RWPE1 (cell line): ENCODE measurements at regions of chr12 and their contacts with region 1.

Region 1: DNA sequence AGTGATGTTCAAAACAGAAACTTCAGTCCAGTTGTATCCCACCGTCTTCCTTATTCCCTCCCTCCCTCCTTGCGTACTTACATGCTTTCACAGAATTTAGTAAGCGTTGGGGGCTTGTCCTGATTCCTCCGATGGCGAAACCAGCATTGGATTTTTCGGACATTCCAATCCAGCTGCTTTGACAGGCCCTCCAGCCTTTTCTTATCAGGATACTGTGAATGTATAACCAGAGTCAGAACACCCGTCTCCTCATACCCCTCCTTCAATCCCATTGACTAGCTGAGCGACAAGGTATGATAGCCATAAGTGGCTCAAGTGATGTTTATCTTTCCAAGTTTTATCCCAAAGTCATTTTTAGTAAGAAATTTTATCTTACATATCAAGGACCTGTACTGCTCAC is 24.2 kb downstream of the CERS5 start:
- DNase-seq: no peak
- H3K27ac ChIP-seq: no peak overlapping the region
- CTCF ChIP-seq: no peak

Region 2: GRCh38 chr12:50127546-50127945 is 15.4 kb before region 1 on chr12:
- CTCF ChIA-PET with region 1: interaction called, 7 read pairs
- POLR2A ChIA-PET with region 1: interaction called, 11 read pairs
- DNase-seq: no peak
- H3K27ac ChIP-seq: peak overlapping the region; percentile 54
- CTCF ChIP-seq: no peak